ENCODE measurements at regions of chr11 and their contacts with region 1.

Region 1: GRCh38 chr11:62601394-62602140 is at the start of gene MTA2:
- DNase-seq: peak; percentile 99
- ATAC-seq: peak; percentile 78
- H3K4me3 ChIP-seq: peak within 1 kb of the TSS; percentile 82 to 97 (median 86)
- H3K4me3 Mint-ChIP-seq: peak within 1 kb of the TSS; percentile 97
- H3K27ac ChIP-seq: peak within 1 kb of the TSS; percentile 78 to 90
- H3K27ac Mint-ChIP-seq: peak within 1 kb of the TSS; percentile 96
- H3K4me1 ChIP-seq: peaks cover 24 to 40% of the 10 kb centered on the region in 2 donors
- H3K4me1 Mint-ChIP-seq: peaks cover 46% of the 10 kb centered on the region
- H3K27me3 ChIP-seq: no peaks in the 10 kb centered on the region
- H3K27me3 Mint-ChIP-seq: no peaks in the 10 kb centered on the region
- CTCF ChIP-seq: no peak
- total RNA-seq, gene MTA2: 127 and 139 TPM in 2 replicates

Region 2: GRCh38 chr11:62444236-62444833 is 157.2 kb before region 1 on chr11:
- CTCF ChIA-PET with region 1: no interaction called
- POLR2A ChIA-PET with region 1: no interaction called
- intact Hi-C with region 1: loop called (anchors 1 kb)
- DNase-seq: peak; percentile 85
- ATAC-seq: peak; percentile 88
- H3K4me3 ChIP-seq: peak overlapping the region in 4 of 5 experiments; percentile 30 to 66 (median 60)
- H3K4me3 Mint-ChIP-seq: peak overlapping the region; percentile 94
- H3K27ac ChIP-seq: peak overlapping the region; percentile 81 to 85
- H3K27ac Mint-ChIP-seq: peak overlapping the region; percentile 98
- H3K4me1 ChIP-seq: peaks cover 24 to 29% of the 10 kb centered on the region in 2 donors
- H3K4me1 Mint-ChIP-seq: peaks cover 29% of the 10 kb centered on the region
- H3K27me3 ChIP-seq: peaks cover 0 to 5% (median 0%) of the 10 kb centered on the region in 4 experiments
- H3K27me3 Mint-ChIP-seq: peaks cover 5% of the 10 kb centered on the region
- CTCF ChIP-seq: no peak

Region 3: GRCh38 chr11:62573592-62574362 is 27.8 kb before region 1 on chr11 and contains the start of gene EEF1G:
- CTCF ChIA-PET with region 1: no interaction called
- POLR2A ChIA-PET with region 1: interaction called, 7 read pairs
- intact Hi-C with region 1: loop called (anchors 1 kb)
- DNase-seq: peak; percentile 99
- ATAC-seq: peak; percentile 93
- H3K4me3 ChIP-seq: peak within 1 kb of the TSS; percentile 74 to 99 (median 80)
- H3K4me3 Mint-ChIP-seq: peak within 1 kb of the TSS; percentile 92
- H3K27ac ChIP-seq: peak within 1 kb of the TSS; percentile 84 to 88
- H3K27ac Mint-ChIP-seq: peak within 1 kb of the TSS; percentile 95
- H3K4me1 ChIP-seq: peaks cover 12 to 25% of the 10 kb centered on the region in 2 donors
- H3K4me1 Mint-ChIP-seq: peaks cover 50% of the 10 kb centered on the region
- H3K27me3 ChIP-seq: no peaks in the 10 kb centered on the region
- H3K27me3 Mint-ChIP-seq: no peaks in the 10 kb centered on the region
- CTCF ChIP-seq: no peak
- total RNA-seq, gene EEF1G: 1,778 and 1,867 TPM in 2 replicates

Region 4: GRCh38 chr11:62612366-62613290 is 11.1 kb after region 1 on chr11 and contains the starts of genes EML3 and ROM1:
- CTCF ChIA-PET with region 1: interaction called, 6 read pairs
- POLR2A ChIA-PET with region 1: interaction called, 16 read pairs
- intact Hi-C with region 1: loop called (anchors 1 kb)
- DNase-seq: peak; percentile 92
- ATAC-seq: peak; percentile 79
- H3K4me3 ChIP-seq: peak within 1 kb of the TSS; percentile 70 to 84 (median 75)
- H3K4me3 Mint-ChIP-seq: peak within 1 kb of the TSS; percentile 97
- H3K27ac ChIP-seq: peak within 1 kb of the TSS; percentile 76 to 96
- H3K27ac Mint-ChIP-seq: peak within 1 kb of the TSS; percentile 99
- H3K4me1 ChIP-seq: peaks cover 10 to 25% of the 10 kb centered on the region in 2 donors
- H3K4me1 Mint-ChIP-seq: peaks cover 25% of the 10 kb centered on the region
- H3K27me3 ChIP-seq: no peaks in the 10 kb centered on the region
- H3K27me3 Mint-ChIP-seq: no peaks in the 10 kb centered on the region
- CTCF ChIP-seq: peak; percentile 99
- total RNA-seq, gene EML3: 127 and 135 TPM in 2 replicates
- total RNA-seq, gene ROM1: 0.68 and 2.0 TPM in 2 replicates

Region 5: DNA sequence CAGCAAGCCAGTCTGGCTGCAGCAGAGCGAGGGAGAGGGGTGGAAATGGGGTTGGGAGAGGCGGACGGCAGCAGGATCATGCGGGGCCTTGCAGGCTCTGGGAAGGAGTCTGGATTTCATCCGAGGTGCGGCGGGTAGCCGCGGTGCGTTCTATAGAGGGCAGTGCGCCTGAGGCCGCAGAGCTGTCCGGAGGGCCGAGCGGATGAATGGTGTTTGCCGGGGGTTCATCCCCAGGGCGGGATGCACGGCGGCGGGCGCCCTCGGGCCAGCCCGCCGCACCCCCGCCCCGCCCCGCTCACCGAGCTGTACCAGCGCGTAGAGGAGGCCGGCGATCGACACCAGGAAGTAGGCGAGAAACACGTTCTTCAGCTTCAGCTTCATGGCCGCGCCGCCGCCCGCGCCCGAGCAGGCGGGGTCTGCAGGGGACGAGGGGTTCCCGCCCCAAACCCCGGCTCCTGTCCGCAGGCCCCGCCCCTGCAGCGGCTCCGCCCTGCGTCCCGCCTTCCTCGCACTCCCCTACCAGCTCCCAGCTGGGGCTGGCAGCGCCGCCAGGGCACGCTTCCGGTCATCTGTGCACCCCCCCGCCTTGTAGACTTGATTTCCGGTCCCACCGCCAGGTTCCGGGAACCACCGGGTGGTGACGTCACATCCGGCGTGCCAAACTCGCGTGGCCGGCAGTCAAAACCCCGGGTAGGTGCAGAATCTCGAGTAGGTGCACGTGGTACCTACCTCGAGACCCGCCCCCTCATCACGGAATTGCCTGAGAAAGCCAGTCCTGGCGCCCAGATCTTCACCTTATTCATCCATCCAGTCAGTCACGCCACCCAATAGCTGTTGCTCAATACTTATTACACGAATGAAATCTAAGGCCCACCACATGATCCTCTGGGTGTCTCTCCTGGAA is 20.3 kb after region 1 on chr11 and contains the start of gene B3GAT3:
- CTCF ChIA-PET with region 1: interaction called, 5 read pairs
- POLR2A ChIA-PET with region 1: interaction called, 6 read pairs
- intact Hi-C with region 1: loop called (anchors 1 kb)
- DNase-seq: peak; percentile 99
- ATAC-seq: peak; percentile 92
- H3K4me3 ChIP-seq: peak within 1 kb of the TSS; percentile 80 to 93 (median 88)
- H3K4me3 Mint-ChIP-seq: peak within 1 kb of the TSS; percentile 98
- H3K27ac ChIP-seq: peak within 1 kb of the TSS; percentile 88 to 98
- H3K27ac Mint-ChIP-seq: peak within 1 kb of the TSS; percentile 95
- H3K4me1 ChIP-seq: peaks cover 11 to 19% of the 10 kb centered on the region in 2 donors
- H3K4me1 Mint-ChIP-seq: peaks cover 23% of the 10 kb centered on the region
- H3K27me3 ChIP-seq: no peaks in the 10 kb centered on the region
- H3K27me3 Mint-ChIP-seq: no peaks in the 10 kb centered on the region
- CTCF ChIP-seq: no peak
- total RNA-seq, gene B3GAT3: 63.1 and 66.6 TPM in 2 replicates

Region 6: DNA sequence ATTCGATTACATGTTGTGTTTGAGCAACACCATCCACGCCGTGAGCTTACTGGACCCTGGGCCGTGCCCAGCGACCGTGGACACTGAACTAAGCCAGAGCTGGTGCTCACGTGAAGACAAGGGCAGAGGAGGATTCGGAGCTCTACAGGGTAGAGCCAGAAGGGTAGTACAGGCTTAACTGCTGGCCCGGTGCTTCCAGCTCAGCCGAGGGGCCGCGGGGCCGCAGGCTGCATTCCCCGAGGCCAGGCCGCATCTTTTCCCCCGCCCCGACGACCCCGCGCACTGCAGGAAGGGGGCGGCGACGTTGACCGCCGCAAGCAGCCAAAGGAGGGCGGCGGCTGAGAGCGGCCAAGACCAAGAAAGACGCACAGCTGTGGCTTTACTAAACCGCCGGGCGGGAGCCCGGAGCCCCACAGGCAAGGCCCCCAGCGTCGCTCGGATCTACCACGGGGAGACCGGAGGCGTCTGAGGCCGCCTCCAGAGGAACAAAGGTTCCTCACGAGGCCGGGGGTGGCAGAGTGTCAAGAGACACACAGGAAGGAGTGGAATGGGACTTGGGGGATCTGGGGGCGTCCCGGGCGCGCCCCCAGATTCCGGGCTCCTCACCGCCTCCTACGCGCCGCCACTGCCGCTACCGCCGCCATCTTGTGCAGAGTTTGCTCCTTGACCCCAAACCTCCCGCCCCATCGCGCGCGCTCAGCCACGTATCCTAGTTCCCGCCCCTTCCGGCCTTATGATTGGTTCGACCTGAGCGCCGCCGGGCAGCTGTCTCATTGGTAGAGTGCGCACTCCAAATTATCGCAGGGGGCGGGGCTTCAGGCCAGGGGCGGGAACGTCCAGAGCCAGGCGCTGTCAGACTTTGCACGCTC is 44.6 kb after region 1 on chr11 and contains the start of gene GANAB:
- CTCF ChIA-PET with region 1: interaction called, 3 read pairs
- POLR2A ChIA-PET with region 1: interaction called, 8 read pairs
- intact Hi-C with region 1: loop called (anchors 1 kb)
- DNase-seq: peak; percentile 97
- ATAC-seq: peak; percentile 99
- H3K4me3 ChIP-seq: peak within 1 kb of the TSS; percentile 54 to 98 (median 90)
- H3K4me3 Mint-ChIP-seq: peak within 1 kb of the TSS; percentile 97
- H3K27ac ChIP-seq: peak within 1 kb of the TSS; percentile 75 to 89
- H3K27ac Mint-ChIP-seq: peak within 1 kb of the TSS; percentile 95
- H3K4me1 ChIP-seq: peaks cover 14 to 21% of the 10 kb centered on the region in 2 donors
- H3K4me1 Mint-ChIP-seq: peaks cover 26% of the 10 kb centered on the region
- H3K27me3 ChIP-seq: no peaks in the 10 kb centered on the region
- H3K27me3 Mint-ChIP-seq: no peaks in the 10 kb centered on the region
- CTCF ChIP-seq: no peak
- total RNA-seq, gene GANAB: 190 and 204 TPM in 2 replicates

Region 7: DNA sequence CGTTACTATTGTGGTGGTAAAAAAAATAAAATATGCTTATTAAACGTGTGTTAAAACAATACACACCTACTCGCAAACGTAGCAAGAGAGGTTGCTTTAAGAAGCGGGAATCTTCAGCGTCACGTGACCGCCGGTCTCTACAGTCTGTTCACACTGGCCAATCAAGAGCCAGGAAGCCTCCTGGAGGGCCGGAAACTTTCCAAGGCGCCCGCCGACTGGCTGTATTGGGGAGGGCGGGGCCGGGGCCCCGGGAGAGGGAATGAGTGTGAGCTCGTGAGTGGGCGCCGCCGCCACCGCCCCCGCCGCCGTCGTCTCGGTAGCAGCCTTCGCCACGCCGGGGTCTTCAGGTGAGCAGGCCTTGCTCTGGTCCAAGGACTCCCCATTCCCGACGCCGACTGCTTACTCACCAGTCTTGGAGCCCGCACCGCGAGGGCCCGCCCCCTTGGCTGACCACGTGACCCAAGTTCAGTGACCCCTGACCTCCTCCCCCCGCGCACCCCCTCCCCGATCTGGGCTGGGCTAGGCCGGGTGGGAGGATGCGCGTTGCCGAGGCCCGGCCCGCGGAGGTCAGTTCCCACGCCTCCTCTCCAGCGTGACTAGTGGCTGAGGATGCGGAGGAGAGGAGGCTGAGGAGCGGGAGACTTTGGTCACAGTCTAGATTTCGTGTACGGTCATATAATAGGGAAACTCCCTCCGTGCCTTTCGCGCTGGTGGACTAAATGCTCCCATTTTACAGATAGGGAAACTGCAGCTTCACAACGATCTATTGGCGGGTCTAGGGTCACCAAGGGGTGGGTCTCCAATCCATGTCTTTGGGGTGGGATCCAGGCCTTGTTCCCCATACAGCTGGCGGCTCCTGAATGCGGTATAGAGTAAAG is 169.8 kb after region 1 on chr11 and contains the start of gene TAF6L:
- CTCF ChIA-PET with region 1: no interaction called
- POLR2A ChIA-PET with region 1: no interaction called
- intact Hi-C with region 1: no loop called
- DNase-seq: peak; percentile 88
- ATAC-seq: peak; percentile 90
- H3K4me3 ChIP-seq: peak within 1 kb of the TSS; percentile 58 to 97 (median 68)
- H3K4me3 Mint-ChIP-seq: peak within 1 kb of the TSS; percentile 95
- H3K27ac ChIP-seq: peak within 1 kb of the TSS; percentile 63 to 84
- H3K27ac Mint-ChIP-seq: peak within 1 kb of the TSS; percentile 96
- H3K4me1 ChIP-seq: peaks cover 15 to 23% of the 10 kb centered on the region in 2 donors
- H3K4me1 Mint-ChIP-seq: peaks cover 26% of the 10 kb centered on the region
- H3K27me3 ChIP-seq: no peaks in the 10 kb centered on the region
- H3K27me3 Mint-ChIP-seq: no peaks in the 10 kb centered on the region
- CTCF ChIP-seq: no peak
- total RNA-seq, gene TAF6L: 43.2 and 48.2 TPM in 2 replicates

Region 8: DNA sequence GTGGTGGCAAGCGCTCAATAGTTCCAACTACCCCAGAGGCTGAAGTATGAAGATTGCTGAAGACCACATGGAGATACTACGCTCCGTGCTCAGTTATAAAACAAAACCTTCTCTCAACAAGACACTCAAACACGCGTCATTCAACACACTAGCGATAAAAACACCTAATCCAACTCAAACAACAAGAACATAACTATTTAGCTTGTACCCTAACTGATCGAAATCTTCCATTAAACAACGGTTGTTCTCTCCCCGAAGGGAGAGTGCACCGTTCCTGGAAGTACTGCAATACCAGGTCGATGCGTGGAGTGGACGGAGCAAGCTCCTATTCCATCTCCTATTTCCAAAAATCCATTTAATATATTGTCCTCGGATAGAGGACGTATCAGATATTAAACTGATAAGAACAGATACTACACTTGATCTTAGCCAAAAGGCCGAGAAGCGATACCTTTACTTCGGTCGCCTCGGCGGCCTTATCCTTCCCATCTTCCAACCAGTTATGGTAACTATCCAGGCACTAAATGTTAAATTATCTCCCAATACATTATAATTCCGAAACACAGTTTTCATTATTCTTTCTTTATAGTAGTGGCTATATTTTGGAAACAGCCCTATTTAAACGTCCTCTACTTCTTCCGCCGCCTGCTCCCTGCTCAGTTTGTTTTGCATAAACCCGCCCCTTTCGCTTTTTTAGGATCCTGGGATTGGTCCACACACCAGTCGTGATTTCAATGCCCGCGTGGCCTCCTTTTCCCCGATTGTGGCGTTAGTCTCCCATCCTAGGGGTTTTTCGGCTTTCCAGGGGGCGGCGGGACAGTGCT is 240.0 kb after region 1 on chr11:
- CTCF ChIA-PET with region 1: no interaction called
- POLR2A ChIA-PET with region 1: interaction called, 18 read pairs
- intact Hi-C with region 1: no loop called
- DNase-seq: peak; percentile 95
- ATAC-seq: peak; percentile 58
- H3K4me3 ChIP-seq: peak overlapping the region; percentile 61 to 97 (median 91)
- H3K4me3 Mint-ChIP-seq: no peak overlapping the region
- H3K27ac ChIP-seq: peak overlapping the region; percentile 99 to 100
- H3K27ac Mint-ChIP-seq: no peak overlapping the region
- H3K4me1 ChIP-seq: peaks cover 14 to 33% of the 10 kb centered on the region in 2 donors
- H3K4me1 Mint-ChIP-seq: peaks cover 18% of the 10 kb centered on the region
- H3K27me3 ChIP-seq: no peaks in the 10 kb centered on the region
- H3K27me3 Mint-ChIP-seq: no peaks in the 10 kb centered on the region
- CTCF ChIP-seq: no peak

Measured in B cell (primary cell).